Transverse colon (tissue), 4 donors: ENCODE measurements at regions of chr22 and their contacts with region 1.

Region 1: DNA sequence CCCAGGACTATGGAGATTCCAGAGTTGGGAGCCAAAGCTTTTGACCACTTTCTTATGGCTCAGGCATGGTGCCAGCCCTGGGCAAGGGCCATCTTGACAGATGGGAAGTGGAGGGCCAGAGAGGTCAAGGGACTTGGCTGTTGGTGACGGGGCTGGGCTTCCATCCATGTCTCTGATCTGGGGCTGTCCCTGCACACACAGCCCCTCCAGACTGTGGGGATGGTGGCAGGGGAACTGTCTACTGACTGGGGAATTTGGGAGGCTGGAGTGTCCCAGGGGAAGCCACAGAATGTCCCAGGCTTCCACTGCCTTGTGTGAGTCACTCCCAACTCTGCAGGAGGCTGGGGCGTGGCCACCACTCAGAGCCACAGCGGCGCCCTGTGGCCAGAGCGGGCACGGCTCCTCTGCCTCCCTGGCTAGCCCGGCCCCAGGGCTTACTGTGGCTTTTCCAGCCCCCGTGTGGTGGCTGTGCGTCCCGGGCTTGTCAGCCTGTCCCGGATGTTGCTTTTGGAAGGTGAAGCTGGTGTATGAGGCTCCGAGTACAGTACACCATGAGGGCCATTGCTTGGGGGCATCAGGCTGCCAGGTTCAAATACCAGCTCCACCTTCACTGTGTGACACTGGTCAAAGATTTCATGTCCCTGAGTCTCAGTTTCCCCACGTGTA is 19.6 kb downstream of the C22orf23 start:
- DNase-seq: peak; percentile 93
- H3K4me3 ChIP-seq: no peak overlapping the region
- H3K27ac ChIP-seq: peak overlapping the region; percentile 68 to 88 (median 74)
- H3K4me1 ChIP-seq: peaks cover 11 to 17% (median 15%) of the 10 kb centered on the region in 4 donors
- H3K27me3 ChIP-seq: no peaks in the 10 kb centered on the region
- CTCF ChIP-seq: peak; percentile 88 to 97 (median 96)
- EP300 ChIP-seq: no peak
- POLR2A ChIP-seq: no peak

Region 2: GRCh38 chr22:37109242-37109917 is 824.5 kb before region 1 on chr22 and contains the start of gene TMPRSS6:
- in situ Hi-C with region 1: no loop called
- intact Hi-C with region 1: no loop called
- DNase-seq: no peak
- H3K4me3 ChIP-seq: no peak within 1 kb of the TSS
- H3K27ac ChIP-seq: no peak within 1 kb of the TSS
- H3K4me1 ChIP-seq: no peaks in the 10 kb centered on the region
- H3K27me3 ChIP-seq: peaks cover under 1% of the 10 kb centered on the region
- CTCF ChIP-seq: no peak
- EP300 ChIP-seq: no peak
- POLR2A ChIP-seq: no peak
- total RNA-seq, gene TMPRSS6: 0.16 to 4.9 (median 0.41) TPM in 3 of 4 donors, not detected in the other

Region 3: GRCh38 chr22:37802310-37803194 is 131.3 kb before region 1 on chr22:
- in situ Hi-C with region 1: no loop called
- intact Hi-C with region 1: no loop called
- DNase-seq: peak; percentile 73
- H3K4me3 ChIP-seq: peak overlapping the region; percentile 30 to 72 (median 56)
- H3K27ac ChIP-seq: peak overlapping the region; percentile 74 to 90 (median 85)
- H3K4me1 ChIP-seq: peaks cover 0 to 51% (median 35%) of the 10 kb centered on the region in 4 donors
- H3K27me3 ChIP-seq: no peaks in the 10 kb centered on the region
- CTCF ChIP-seq: no peak
- EP300 ChIP-seq: no peak
- POLR2A ChIP-seq: peak; percentile 68

Region 4: DNA sequence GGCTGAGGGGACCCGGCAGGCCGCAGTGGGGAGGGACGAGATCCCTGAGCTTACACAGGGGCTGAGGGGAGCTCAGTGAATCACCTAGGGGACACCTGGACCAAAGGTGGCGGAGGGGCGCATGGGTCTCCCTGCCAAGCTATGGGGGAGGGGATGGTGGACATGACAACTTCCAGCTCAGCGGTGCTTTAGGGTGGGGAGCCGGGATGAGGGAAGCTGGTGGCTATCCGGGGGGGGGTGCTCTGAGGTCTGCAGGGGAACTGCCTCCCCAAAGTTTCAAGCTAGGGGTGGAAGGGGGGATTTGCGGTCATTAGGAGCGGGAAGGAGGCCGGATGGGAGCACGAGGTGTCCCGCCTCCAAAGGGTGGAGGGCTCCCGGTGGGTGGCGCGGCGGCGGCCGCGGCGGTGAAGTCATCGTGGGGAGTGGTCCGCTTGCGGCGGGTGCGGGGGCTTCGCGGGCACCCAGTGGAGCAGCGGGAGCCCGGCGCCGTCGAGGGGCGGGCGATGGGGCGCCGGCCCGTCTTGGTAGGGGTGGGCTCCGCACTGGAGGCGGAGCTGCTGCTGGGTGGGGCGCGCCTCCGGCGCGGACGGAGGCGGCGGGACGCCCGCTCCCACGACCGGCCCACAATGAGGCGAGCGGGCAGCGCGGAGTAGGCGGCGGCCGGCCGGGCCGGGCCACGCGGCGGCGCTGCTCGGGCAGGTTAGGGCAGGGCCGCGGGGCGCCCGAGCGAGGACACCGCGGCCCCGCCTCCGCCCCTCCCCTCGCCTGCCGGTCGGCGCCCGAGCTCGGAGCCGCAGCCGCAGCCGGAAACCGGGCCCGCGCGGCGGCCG is 28.1 kb before region 1 on chr22 and contains the start of gene MICALL1:
- in situ Hi-C with region 1: no loop called
- intact Hi-C with region 1: loop called (anchors 2 kb)
- DNase-seq: peak; percentile 85
- H3K4me3 ChIP-seq: peak within 1 kb of the TSS; percentile 67 to 93 (median 81)
- H3K27ac ChIP-seq: peak within 1 kb of the TSS; percentile 87 to 93 (median 90)
- H3K4me1 ChIP-seq: peaks cover 7 to 37% (median 22%) of the 10 kb centered on the region in 4 donors
- H3K27me3 ChIP-seq: no peaks in the 10 kb centered on the region
- CTCF ChIP-seq: peak in 1 of 5 experiments; percentile 13
- EP300 ChIP-seq: no peak
- POLR2A ChIP-seq: no peak
- total RNA-seq, gene MICALL1: 26.8 to 87.2 (median 37.3) TPM

Region 5: DNA sequence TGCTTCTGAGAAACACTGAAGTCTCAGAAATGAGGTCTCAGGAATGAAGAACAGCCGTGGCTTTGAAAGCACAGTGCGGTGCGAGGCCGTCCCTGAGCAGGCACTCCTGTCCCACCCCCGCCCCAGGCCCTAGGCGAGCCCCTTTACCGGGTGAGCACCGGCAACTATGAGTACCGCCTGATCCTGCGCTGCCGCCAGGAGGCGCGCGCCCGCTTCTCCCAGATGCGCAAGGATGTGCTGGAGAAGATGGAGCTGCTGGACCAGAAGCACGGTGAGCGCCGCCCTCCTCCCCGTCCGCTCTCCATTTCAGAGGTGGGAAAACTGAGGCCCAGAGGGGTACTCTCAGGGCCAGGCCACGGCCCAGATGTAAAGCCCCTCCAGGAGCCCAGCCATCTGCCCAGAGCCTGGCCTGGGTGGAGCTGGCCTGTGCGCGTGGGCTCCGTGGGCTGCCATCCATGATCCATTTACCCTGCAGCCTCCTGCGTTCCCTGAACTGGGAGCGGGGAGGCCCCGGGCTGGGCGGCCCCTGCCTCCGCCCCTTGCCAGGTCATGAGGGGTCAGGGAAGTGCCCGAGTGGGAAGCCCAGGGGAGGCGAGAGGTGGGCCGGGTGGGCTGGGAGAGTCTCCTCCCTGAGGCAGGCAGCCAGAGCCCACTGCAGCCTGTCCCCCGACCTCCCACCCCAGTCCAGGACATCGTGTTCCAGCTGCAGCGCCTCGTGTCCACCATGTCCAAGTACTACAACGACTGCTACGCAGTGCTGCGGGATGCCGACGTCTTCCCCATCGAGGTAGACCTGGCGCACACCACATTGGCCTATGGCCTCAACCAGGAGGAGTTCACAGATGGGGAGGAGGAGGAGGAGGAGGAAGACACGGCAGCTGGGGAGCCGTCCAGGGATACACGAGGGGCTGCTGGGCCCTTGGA is 140.6 kb after region 1 on chr22:
- in situ Hi-C with region 1: no loop called
- intact Hi-C with region 1: no loop called
- DNase-seq: no peak
- H3K4me3 ChIP-seq: no peak overlapping the region
- H3K27ac ChIP-seq: no peak overlapping the region
- H3K4me1 ChIP-seq: no peaks in the 10 kb centered on the region
- H3K27me3 ChIP-seq: no peaks in the 10 kb centered on the region
- CTCF ChIP-seq: peak in 1 of 5 experiments; percentile 8
- EP300 ChIP-seq: no peak
- POLR2A ChIP-seq: no peak